ENCODE measurements at regions of chr19 and their contacts with region 1.

Region 1: DNA sequence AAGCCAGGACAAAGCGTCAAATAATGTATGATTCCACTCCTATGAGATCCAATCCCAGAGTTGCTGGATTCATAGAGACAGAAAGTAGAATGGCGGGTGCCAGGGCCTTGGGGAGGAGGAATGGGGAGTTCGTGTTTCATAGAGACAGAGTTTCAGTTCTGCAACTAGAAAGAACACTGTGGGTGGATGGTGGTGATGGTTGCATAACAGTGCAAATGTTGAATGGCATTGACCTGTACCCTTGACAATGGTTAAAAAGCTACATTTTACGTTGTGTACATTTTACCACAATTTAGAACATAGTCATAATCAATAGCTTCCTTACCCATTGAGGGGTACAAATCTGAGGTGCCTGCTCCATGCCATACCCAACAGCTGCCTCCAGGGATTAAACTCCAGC is 33.4 kb downstream of the MBD3L2B start:
- DNase-seq: no peak
- ATAC-seq: no peak
- H3K4me3 ChIP-seq: no peak overlapping the region
- H3K27ac ChIP-seq: no peak overlapping the region
- H3K4me1 ChIP-seq: no peaks in the 10 kb centered on the region
- CTCF ChIP-seq: no peak
- EP300 ChIP-seq: no peak
- POLR2A ChIP-seq: no peak
- RAD21 ChIP-seq: no peak

Region 2: DNA sequence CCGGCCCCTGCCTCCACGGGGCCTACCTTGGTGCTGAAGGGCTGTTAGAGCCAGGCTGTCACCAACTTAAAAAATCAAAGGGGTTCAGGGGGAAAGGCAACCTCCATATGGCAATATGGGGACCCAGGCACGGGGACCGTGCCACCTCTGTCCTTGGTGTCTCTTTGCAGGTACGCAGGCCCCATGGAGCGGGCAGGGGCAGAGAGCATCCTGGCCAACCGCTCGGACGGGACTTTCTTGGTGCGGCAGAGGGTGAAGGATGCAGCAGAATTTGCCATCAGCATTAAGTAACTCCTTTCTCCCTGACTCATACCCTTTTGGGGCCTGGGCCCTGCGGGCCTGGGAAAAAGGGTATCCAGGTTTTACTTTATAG is 140.0 kb before region 1 on chr19:
- CTCF ChIA-PET with region 1: no interaction called
- POLR2A ChIA-PET with region 1: interaction called, 10 read pairs
- DNase-seq: no peak
- ATAC-seq: no peak
- H3K4me3 ChIP-seq: no peak overlapping the region
- H3K27ac ChIP-seq: no peak overlapping the region
- H3K4me1 ChIP-seq: no peaks in the 10 kb centered on the region
- CTCF ChIP-seq: no peak
- EP300 ChIP-seq: no peak
- POLR2A ChIP-seq: no peak
- RAD21 ChIP-seq: no peak